ENCODE measurements at regions of chr2 and their contacts with region 1.

Region 1: GRCh38 chr2:224946895-224947294 is 95.4 kb downstream of the DOCK10 start:
- DNase-seq: peak in 7 of 9 donors; percentile 60 to 82 (median 77)
- ATAC-seq: peak; percentile 90
- H3K4me3 ChIP-seq: peak overlapping the region; percentile 59
- H3K4me3 Mint-ChIP-seq: peak overlapping the region; percentile 79 to 99 (median 91)
- H3K27ac ChIP-seq: peak overlapping the region; percentile 84
- H3K27ac Mint-ChIP-seq: peak overlapping the region; percentile 68 to 98 (median 92)
- H3K4me1 ChIP-seq: peaks cover 52 to 69% of the 10 kb centered on the region in 2 donors
- H3K4me1 Mint-ChIP-seq: peaks cover 54 to 91% (median 79%) of the 10 kb centered on the region in 7 donors
- H3K27me3 ChIP-seq: no peaks in the 10 kb centered on the region
- H3K27me3 Mint-ChIP-seq: no peaks in the 10 kb centered on the region

Region 2: DNA sequence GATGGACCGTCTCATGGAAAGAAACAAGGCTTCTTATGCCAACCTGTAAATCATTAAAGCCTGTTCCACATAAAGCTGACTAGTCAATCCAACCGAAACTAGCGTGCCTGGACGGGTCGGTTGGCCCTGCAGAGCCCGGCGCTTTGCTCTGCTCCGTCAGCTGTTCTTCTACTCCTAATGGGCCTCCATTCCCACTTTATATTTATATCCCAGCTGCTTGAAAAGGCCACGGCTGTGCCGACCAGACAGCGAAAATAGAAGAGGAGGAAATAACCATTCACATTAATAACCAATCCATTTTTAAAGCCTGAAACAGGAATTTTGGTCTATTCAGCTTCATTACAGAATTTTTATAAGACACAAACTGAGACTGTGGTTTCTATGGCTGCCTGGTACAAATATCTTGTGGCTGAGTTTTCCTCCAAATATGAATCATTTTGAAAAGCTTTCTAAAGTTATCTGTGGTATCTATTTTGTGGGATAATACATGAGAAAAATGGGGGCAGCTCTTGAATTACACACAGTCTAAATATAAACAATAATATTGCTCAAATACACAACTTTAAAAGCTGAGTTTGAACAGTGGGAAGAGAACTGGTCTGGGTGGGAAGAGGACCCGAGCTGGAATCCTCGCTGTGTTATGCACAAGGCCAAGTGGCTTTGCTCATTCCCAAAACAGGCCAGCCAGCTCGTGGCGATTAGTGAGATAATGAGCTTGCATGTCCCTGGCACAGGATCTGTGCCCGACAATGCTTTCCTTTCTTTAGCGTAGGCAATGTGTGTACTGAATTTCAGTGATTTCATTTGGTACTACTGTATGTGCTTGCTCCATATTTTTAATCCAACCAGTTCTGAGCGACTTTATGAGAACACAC is 534.5 kb before region 1 on chr2:
- CTCF ChIA-PET with region 1: no interaction called
- POLR2A ChIA-PET with region 1: no interaction called
- intact Hi-C with region 1: no loop called
- DNase-seq: no peak
- ATAC-seq: no peak
- H3K4me3 ChIP-seq: no peak overlapping the region
- H3K4me3 Mint-ChIP-seq: no peak overlapping the region
- H3K27ac ChIP-seq: no peak overlapping the region
- H3K27ac Mint-ChIP-seq: no peak overlapping the region
- H3K4me1 ChIP-seq: no peaks in the 10 kb centered on the region
- H3K4me1 Mint-ChIP-seq: peaks cover 0 to 2% (median 2%) of the 10 kb centered on the region in 7 donors
- H3K27me3 ChIP-seq: no peaks in the 10 kb centered on the region
- H3K27me3 Mint-ChIP-seq: peaks cover 5 to 23% (median 7%) of the 10 kb centered on the region in 5 donors

Region 3: GRCh38 chr2:224894356-224894755 is 52.5 kb before region 1 on chr2:
- CTCF ChIA-PET with region 1: no interaction called
- POLR2A ChIA-PET with region 1: no interaction called
- intact Hi-C with region 1: loop called in 1 of 2 experiments (anchors 2 kb)
- DNase-seq: peak in 4 of 9 donors; percentile 8 to 21 (median 10)
- ATAC-seq: peak; percentile 80
- H3K4me3 ChIP-seq: no peak overlapping the region
- H3K4me3 Mint-ChIP-seq: peak overlapping the region in 6 of 10 donors; percentile 8 to 75 (median 58)
- H3K27ac ChIP-seq: no peak overlapping the region
- H3K27ac Mint-ChIP-seq: peak overlapping the region; percentile 5 to 92 (median 69)
- H3K4me1 ChIP-seq: peaks cover 12 to 16% of the 10 kb centered on the region in 2 donors
- H3K4me1 Mint-ChIP-seq: peaks cover 35 to 76% (median 63%) of the 10 kb centered on the region in 7 donors
- H3K27me3 ChIP-seq: no peaks in the 10 kb centered on the region
- H3K27me3 Mint-ChIP-seq: no peaks in the 10 kb centered on the region

Region 4: DNA sequence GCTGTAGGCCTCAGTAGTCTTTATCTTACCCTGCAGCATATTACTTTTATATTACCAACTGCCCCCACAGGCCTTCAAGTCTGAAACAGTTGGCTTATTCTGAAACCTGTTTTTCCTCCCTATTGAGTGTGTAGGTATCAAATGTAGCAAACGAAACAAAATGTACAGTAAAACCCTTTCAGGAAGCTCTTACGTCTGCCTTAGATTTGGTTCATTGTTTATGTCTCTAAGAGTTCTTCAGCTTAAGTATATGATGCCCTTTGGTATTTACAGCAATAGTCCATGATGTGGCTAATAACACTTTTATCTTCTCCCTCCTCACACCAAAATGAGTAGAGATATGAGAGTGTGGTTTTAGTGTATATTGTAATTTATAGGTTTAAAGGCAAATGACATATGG is 13.5 kb before region 1 on chr2:
- CTCF ChIA-PET with region 1: interaction called, 4 read pairs
- POLR2A ChIA-PET with region 1: interaction called, 33 read pairs
- intact Hi-C with region 1: loop called (anchors 1 kb)
- DNase-seq: no peak
- ATAC-seq: peak; percentile 36
- H3K4me3 ChIP-seq: no peak overlapping the region
- H3K4me3 Mint-ChIP-seq: peak overlapping the region; percentile 17 to 85 (median 65)
- H3K27ac ChIP-seq: peak overlapping the region; percentile 32
- H3K27ac Mint-ChIP-seq: peak overlapping the region; percentile 75 to 99 (median 87)
- H3K4me1 ChIP-seq: peaks cover 62 to 70% of the 10 kb centered on the region in 2 donors
- H3K4me1 Mint-ChIP-seq: peaks cover 78 to 100% (median 95%) of the 10 kb centered on the region in 7 donors
- H3K27me3 ChIP-seq: no peaks in the 10 kb centered on the region
- H3K27me3 Mint-ChIP-seq: no peaks in the 10 kb centered on the region

Region 5: GRCh38 chr2:224982910-224983711 is 36.2 kb after region 1 on chr2:
- CTCF ChIA-PET with region 1: interaction called, 4 read pairs
- POLR2A ChIA-PET with region 1: interaction called, 7 read pairs
- intact Hi-C with region 1: loop called in 1 of 2 experiments (anchors 1 kb)
- DNase-seq: peak in 7 of 9 donors; percentile 44 to 66 (median 52)
- ATAC-seq: peak; percentile 74
- H3K4me3 ChIP-seq: no peak overlapping the region
- H3K4me3 Mint-ChIP-seq: peak overlapping the region; percentile 63 to 85 (median 77)
- H3K27ac ChIP-seq: peak overlapping the region; percentile 50
- H3K27ac Mint-ChIP-seq: peak overlapping the region; percentile 85 to 97 (median 92)
- H3K4me1 ChIP-seq: peaks cover 42 to 58% of the 10 kb centered on the region in 2 donors
- H3K4me1 Mint-ChIP-seq: peaks cover 55 to 91% (median 89%) of the 10 kb centered on the region in 7 donors
- H3K27me3 ChIP-seq: no peaks in the 10 kb centered on the region
- H3K27me3 Mint-ChIP-seq: no peaks in the 10 kb centered on the region

Region 6: DNA sequence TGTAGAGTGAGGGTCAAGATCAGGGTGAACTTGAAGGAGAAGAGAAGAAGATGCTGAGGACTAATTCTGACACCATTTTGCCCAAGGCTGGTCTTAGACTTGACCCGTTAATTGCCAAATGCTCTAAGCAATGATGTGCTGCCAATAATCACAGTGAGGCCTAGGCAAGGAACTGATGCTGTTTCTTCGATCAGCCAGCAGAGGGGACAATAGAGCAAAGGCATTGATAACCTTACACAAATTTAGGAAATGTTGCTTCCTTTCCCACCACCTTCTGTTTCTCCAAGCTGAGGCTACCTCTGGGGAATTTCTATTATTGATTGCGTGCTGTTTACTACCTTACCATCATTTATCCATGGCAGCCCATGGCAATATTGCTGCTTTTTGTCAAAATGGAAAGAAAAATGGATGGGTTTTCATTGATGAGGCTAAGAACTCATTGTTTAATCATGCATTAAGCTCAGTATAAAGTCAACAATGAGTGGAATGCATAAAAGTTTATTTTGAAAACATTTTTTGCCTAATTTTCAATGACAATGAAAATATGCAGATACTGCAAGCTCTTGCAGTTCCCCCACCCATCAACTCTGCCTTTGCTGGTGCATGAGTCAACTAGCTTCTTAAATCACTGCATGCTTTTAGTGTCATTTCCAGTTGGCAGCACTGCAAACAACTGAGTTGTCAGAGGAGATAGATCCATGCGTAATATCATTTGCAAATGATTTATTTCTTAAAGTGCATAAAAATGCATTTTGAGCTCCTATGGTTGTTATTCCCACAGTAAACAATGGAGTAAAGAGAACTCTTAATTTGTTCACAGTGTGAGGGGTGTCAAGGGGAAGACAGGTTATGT is 336.2 kb after region 1 on chr2:
- CTCF ChIA-PET with region 1: no interaction called
- POLR2A ChIA-PET with region 1: no interaction called
- intact Hi-C with region 1: loop called in 1 of 2 experiments (anchors 5 kb)
- DNase-seq: peak in 5 of 9 donors; percentile 11 to 29 (median 20)
- ATAC-seq: peak; percentile 48
- H3K4me3 ChIP-seq: no peak overlapping the region
- H3K4me3 Mint-ChIP-seq: no peak overlapping the region
- H3K27ac ChIP-seq: no peak overlapping the region
- H3K27ac Mint-ChIP-seq: no peak overlapping the region
- H3K4me1 ChIP-seq: no peaks in the 10 kb centered on the region
- H3K4me1 Mint-ChIP-seq: peaks cover 0 to 8% (median 0%) of the 10 kb centered on the region in 7 donors
- H3K27me3 ChIP-seq: no peaks in the 10 kb centered on the region
- H3K27me3 Mint-ChIP-seq: peaks cover 0 to 2% (median 0%) of the 10 kb centered on the region in 5 donors

Measured in naive thymus-derived CD4-positive, alpha-beta T cell (primary cell).